Calu3 (cell line): ENCODE measurements at regions of chr5 and their contacts with region 1.

Region 1: GRCh38 chr5:148314204-148314603 is 2.0 kb downstream of the SPINK7 start:
- DNase-seq: peak; percentile 36
- H3K4me3 Mint-ChIP-seq: no peak overlapping the region
- H3K27ac Mint-ChIP-seq: no peak overlapping the region
- H3K4me1 Mint-ChIP-seq: peaks cover 6% of the 10 kb centered on the region
- H3K27me3 Mint-ChIP-seq: no peaks in the 10 kb centered on the region
- CTCF ChIP-seq: peak; percentile 37

Region 2: GRCh38 chr5:148353634-148354033 is 39.4 kb after region 1 on chr5:
- CTCF ChIA-PET with region 1: interaction called, 11 read pairs
- intact Hi-C with region 1: loop called (anchors 1 kb)
- DNase-seq: no peak
- H3K4me3 Mint-ChIP-seq: no peak overlapping the region
- H3K27ac Mint-ChIP-seq: no peak overlapping the region
- H3K4me1 Mint-ChIP-seq: no peaks in the 10 kb centered on the region
- H3K27me3 Mint-ChIP-seq: no peaks in the 10 kb centered on the region
- CTCF ChIP-seq: no peak

Region 3: DNA sequence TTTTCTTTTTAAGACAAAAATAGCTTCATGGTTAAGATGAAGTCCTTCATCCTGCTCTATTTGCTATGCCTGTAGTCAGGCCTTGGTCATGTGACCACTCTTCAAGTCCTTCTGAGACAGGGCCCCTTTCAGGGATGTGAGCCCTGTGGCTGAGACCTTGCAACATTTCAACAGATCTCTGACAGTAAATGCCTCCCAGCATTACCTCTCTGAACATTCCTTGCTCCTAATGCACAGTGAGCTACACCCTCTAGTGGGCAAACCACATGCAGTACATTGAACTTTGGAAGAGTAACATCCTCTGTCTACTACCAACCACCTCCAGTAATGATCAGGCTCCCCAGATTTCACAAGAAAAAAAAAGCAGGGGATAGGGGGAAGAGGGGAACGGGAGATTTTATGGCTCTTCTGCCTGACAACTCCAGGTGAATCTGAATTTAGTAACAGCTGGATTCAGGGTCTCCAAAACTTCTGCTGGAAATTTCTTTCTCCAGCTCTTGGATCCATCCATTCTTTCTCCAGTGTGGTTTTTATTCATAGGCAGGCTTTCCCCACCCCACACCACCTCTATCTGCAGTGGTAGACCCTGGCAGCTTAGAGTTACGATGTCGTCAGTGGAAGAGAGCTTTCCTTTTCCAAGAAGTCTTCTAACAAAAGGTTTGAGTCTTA is 60.6 kb after region 1 on chr5:
- CTCF ChIA-PET with region 1: interaction called, 16 read pairs
- intact Hi-C with region 1: loop called (anchors 1 kb)
- DNase-seq: peak; percentile 64
- H3K4me3 Mint-ChIP-seq: no peak overlapping the region
- H3K27ac Mint-ChIP-seq: no peak overlapping the region
- H3K4me1 Mint-ChIP-seq: peaks cover 18% of the 10 kb centered on the region
- H3K27me3 Mint-ChIP-seq: no peaks in the 10 kb centered on the region
- CTCF ChIP-seq: peak; percentile 71

Region 4: GRCh38 chr5:148523139-148523538 is 208.9 kb after region 1 on chr5:
- CTCF ChIA-PET with region 1: no interaction called
- intact Hi-C with region 1: no loop called
- DNase-seq: peak; percentile 4
- H3K4me3 Mint-ChIP-seq: no peak overlapping the region
- H3K27ac Mint-ChIP-seq: no peak overlapping the region
- H3K4me1 Mint-ChIP-seq: no peaks in the 10 kb centered on the region
- H3K27me3 Mint-ChIP-seq: peaks cover 81% of the 10 kb centered on the region
- CTCF ChIP-seq: no peak